Activated B cell treated with CpG ODN at 0.5 μM for 24 hours (primary cell): ENCODE measurements at regions of chr1 and their contacts with region 1.

Region 1: GRCh38 chr1:91165033-91165654 is 143.3 kb upstream of the ZNF644 start:
- DNase-seq: peak; percentile 59
- ATAC-seq: peak; percentile 93
- H3K4me3 Mint-ChIP-seq: no peak overlapping the region
- H3K27ac Mint-ChIP-seq: no peak overlapping the region
- H3K4me1 Mint-ChIP-seq: no peaks in the 10 kb centered on the region
- H3K27me3 Mint-ChIP-seq: peaks cover 2% of the 10 kb centered on the region
- CTCF ChIP-seq: peak; percentile 57

Region 2: GRCh38 chr1:90045853-90046563 is 1119.1 kb before region 1 on chr1:
- CTCF ChIA-PET with region 1: no interaction called
- POLR2A ChIA-PET with region 1: no interaction called
- intact Hi-C with region 1: loop called (anchors 2 kb)
- DNase-seq: no peak
- ATAC-seq: no peak
- H3K4me3 Mint-ChIP-seq: no peak overlapping the region
- H3K27ac Mint-ChIP-seq: no peak overlapping the region
- H3K4me1 Mint-ChIP-seq: no peaks in the 10 kb centered on the region
- H3K27me3 Mint-ChIP-seq: no peaks in the 10 kb centered on the region
- CTCF ChIP-seq: no peak

Region 3: DNA sequence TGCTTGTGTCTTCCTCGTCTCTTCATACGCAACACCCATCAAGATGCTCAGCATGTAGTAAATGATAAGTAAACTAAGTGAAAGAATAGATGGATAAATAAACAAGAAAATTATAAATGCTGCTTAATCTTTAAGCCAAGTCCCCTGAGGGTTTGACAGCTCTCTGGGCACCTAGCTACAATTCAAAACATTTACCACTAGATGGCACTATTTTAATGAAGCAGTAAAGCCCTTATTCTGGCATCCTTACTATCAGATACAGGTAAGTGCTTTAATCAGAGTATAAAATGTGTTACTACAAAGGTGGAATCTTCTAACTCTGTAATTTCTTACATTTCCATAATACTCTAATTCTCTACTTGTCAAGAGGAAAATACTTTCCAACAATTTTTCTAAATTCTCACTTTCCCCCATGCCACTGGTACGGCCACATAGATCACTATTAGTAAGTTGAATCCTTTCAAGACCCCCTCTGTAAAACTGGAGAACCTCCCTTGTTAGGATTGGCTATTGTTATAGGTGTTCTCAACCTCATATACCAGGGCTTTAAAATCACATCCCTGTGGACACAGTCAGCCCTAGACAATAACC is 585.8 kb before region 1 on chr1:
- CTCF ChIA-PET with region 1: interaction called, 23 read pairs
- POLR2A ChIA-PET with region 1: no interaction called
- intact Hi-C with region 1: loop called (anchors 1 kb)
- DNase-seq: no peak
- ATAC-seq: no peak
- H3K4me3 Mint-ChIP-seq: no peak overlapping the region
- H3K27ac Mint-ChIP-seq: no peak overlapping the region
- H3K4me1 Mint-ChIP-seq: no peaks in the 10 kb centered on the region
- H3K27me3 Mint-ChIP-seq: peaks cover 6% of the 10 kb centered on the region
- CTCF ChIP-seq: peak; percentile 58

Region 4: DNA sequence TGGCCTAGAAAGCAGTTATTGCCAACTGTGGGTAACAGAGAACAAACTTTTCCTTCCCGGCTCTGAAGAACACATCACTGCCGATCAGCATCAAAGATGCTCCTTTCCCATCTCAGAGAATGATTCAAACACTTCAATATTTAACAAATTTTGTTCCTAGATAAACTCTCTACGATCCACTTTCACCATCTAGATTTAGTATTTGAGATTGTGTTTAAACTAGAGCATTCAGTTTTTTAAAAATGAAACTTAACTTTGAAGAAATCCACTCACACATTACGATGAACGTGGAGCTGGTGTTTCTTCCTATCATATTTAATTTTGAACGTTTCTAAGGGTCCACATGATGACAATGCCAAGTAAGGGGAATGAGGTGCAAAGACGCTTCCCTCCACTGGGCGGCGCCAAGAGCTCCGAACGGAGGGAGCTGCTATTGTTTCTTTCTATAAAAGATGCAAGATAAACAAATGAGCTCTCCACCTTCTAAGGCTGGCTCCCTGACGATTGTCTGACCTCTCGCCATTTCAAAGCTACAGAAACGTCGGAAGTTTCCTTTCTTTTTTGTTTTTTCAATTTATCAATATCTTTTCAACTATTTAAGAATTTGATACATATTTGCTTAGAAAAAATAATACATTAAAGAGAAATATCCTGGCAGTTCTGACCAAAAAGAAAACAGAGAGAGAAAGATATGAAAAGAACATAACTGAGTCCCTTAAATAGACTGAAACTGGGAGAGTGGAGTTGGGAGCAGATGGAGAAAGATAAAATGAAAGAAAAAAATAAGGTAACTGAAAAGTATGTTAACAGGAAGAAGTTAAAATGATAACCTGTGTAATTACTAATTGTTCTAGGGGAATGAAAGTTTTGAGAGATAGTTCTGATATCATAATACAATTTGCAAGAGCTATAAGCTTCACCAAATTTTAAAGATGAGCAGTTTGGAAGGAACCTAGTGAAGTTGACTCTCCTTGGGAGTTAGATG is 443.6 kb before region 1 on chr1:
- CTCF ChIA-PET with region 1: interaction called, 13 read pairs
- POLR2A ChIA-PET with region 1: no interaction called
- intact Hi-C with region 1: loop called (anchors 2 kb)
- DNase-seq: no peak
- ATAC-seq: peak; percentile 40
- H3K4me3 Mint-ChIP-seq: no peak overlapping the region
- H3K27ac Mint-ChIP-seq: no peak overlapping the region
- H3K4me1 Mint-ChIP-seq: peaks cover 36% of the 10 kb centered on the region
- H3K27me3 Mint-ChIP-seq: peaks cover 79% of the 10 kb centered on the region
- CTCF ChIP-seq: no peak

Region 5: DNA sequence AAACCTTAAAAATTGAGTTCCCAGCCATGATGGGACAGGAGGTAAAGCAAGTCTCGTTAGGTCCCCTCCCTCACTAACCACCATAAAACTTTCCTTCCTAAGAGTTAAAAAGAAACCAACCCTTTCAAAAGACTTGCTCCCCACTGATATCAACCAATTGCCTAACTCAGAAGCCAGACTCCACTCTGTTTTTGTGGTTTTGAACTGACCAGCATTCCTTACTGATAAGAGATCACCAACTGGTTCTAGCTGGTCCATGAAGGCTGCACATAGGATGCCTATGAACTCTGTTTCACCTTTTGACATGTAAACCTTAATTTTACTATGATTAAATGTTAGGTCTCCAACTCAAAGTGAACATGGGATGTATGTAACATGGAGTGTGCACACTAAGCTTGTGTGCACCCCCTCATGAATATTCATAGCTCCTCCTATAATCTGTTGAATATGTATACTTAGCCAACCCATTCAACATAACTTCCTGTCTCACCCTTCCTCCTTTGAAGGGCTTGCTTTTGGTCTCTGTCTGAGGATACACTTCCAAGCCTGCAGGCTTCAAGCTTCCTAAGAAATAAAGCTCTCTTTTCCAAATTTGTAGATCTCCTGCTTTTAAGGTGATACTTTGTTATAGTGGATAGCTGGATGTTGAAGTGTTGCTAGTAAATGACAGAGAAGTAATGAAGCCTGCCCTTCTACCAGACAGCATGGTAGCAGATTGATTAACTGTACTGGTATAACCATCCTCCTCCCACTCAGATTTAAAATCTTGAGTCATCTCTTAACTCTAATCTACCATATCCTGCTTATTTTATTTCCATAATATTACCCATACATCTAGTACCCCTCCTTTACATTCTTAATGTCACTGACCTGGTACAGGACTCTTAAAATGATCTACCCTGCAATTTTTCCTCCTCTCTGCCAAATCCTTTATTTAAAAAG is 238.9 kb before region 1 on chr1:
- CTCF ChIA-PET with region 1: no interaction called
- POLR2A ChIA-PET with region 1: no interaction called
- intact Hi-C with region 1: loop called (anchors 5 kb)
- DNase-seq: no peak
- ATAC-seq: no peak
- H3K4me3 Mint-ChIP-seq: no peak overlapping the region
- H3K27ac Mint-ChIP-seq: no peak overlapping the region
- H3K4me1 Mint-ChIP-seq: peaks cover 68% of the 10 kb centered on the region
- H3K27me3 Mint-ChIP-seq: no peaks in the 10 kb centered on the region
- CTCF ChIP-seq: no peak

Region 6: GRCh38 chr1:91176250-91176649 is 11.1 kb after region 1 on chr1:
- CTCF ChIA-PET with region 1: interaction called, 14 read pairs
- POLR2A ChIA-PET with region 1: no interaction called
- intact Hi-C with region 1: no loop called
- DNase-seq: no peak
- ATAC-seq: no peak
- H3K4me3 Mint-ChIP-seq: no peak overlapping the region
- H3K27ac Mint-ChIP-seq: no peak overlapping the region
- H3K4me1 Mint-ChIP-seq: no peaks in the 10 kb centered on the region
- H3K27me3 Mint-ChIP-seq: peaks cover 28% of the 10 kb centered on the region
- CTCF ChIP-seq: no peak